Ascending aorta (tissue), 2 donors: ENCODE measurements at regions of chr7 and their contacts with region 1.

Region 1: DNA sequence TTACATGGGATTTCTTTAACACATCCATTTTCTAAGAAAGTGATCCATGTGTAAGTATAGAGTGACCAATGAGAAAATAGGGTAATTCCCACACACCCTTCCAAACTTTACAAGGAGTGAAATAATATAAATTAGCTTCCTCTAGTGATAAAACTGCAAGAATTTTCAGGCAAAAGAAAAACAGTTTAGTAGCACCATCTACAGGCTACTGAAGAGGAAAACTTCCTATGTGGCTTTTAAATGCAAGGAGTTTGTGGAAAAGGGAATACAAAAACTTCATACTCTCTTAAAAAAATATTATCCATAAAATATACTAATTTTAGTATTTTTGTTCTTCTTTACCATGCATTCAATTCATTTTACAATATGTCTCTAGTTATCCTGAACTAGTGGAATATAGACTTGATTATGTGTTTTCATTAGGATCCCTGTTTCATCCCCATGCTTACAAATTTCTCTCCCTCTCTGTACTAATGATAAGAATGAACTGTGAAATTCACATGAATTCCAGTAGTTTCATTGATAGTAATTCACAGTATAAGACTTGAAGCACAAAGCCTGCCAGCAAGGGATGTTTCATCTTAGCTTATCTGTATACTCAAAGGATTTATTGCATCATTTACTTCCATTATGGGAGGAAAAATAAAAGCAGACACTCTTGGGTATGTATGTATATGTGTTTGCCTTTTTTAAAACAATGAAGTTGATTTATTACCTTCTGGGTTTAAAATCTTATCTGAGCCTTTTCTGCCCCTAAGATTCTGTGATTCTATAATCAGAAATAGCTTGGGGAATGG is 442.9 kb downstream of the AUTS2 start:
- DNase-seq: no peak
- H3K4me3 ChIP-seq: no peak overlapping the region
- H3K27ac ChIP-seq: no peak overlapping the region
- H3K4me1 ChIP-seq: peaks cover 0 to 5% of the 10 kb centered on the region in 2 donors
- H3K27me3 ChIP-seq: no peaks in the 10 kb centered on the region
- CTCF ChIP-seq: peak in 2 of 3 experiments; percentile 16 to 40

Region 2: GRCh38 chr7:70072220-70072619 is 31.1 kb after region 1 on chr7:
- intact Hi-C with region 1: no loop called
- DNase-seq: no peak
- H3K4me3 ChIP-seq: no peak overlapping the region
- H3K27ac ChIP-seq: no peak overlapping the region
- H3K4me1 ChIP-seq: no peaks in the 10 kb centered on the region
- H3K27me3 ChIP-seq: no peaks in the 10 kb centered on the region
- CTCF ChIP-seq: no peak

Region 3: DNA sequence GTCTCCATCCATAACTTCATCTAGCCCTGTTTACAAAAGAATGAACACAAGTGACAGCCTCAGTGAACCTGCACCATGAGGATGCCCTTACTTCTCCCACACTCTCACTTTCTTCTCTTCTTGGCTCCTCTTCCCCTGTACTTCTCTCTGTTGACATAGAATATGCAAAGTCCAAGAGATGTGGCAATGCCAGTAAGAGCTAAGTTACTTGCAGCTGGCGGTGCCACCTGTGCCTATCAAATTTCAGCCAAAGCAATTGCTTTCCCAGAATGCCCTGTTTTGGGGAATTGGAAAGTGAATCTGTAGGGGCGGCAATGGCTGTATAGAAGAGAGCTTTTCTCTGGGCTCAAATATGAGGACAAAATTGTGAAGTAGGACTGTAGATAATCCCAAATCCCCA is 114.9 kb after region 1 on chr7:
- intact Hi-C with region 1: loop called (anchors 5 kb)
- DNase-seq: no peak
- H3K4me3 ChIP-seq: no peak overlapping the region
- H3K27ac ChIP-seq: no peak overlapping the region
- H3K4me1 ChIP-seq: no peaks in the 10 kb centered on the region
- H3K27me3 ChIP-seq: no peaks in the 10 kb centered on the region
- CTCF ChIP-seq: no peak

Region 4: GRCh38 chr7:70271617-70272081 is 230.5 kb after region 1 on chr7:
- intact Hi-C with region 1: no loop called
- DNase-seq: no peak
- H3K4me3 ChIP-seq: no peak overlapping the region
- H3K27ac ChIP-seq: no peak overlapping the region
- H3K4me1 ChIP-seq: no peaks in the 10 kb centered on the region
- H3K27me3 ChIP-seq: no peaks in the 10 kb centered on the region
- CTCF ChIP-seq: no peak